A673 (cell line): ENCODE measurements at regions of chr18 and their contacts with region 1.

Region 1: DNA sequence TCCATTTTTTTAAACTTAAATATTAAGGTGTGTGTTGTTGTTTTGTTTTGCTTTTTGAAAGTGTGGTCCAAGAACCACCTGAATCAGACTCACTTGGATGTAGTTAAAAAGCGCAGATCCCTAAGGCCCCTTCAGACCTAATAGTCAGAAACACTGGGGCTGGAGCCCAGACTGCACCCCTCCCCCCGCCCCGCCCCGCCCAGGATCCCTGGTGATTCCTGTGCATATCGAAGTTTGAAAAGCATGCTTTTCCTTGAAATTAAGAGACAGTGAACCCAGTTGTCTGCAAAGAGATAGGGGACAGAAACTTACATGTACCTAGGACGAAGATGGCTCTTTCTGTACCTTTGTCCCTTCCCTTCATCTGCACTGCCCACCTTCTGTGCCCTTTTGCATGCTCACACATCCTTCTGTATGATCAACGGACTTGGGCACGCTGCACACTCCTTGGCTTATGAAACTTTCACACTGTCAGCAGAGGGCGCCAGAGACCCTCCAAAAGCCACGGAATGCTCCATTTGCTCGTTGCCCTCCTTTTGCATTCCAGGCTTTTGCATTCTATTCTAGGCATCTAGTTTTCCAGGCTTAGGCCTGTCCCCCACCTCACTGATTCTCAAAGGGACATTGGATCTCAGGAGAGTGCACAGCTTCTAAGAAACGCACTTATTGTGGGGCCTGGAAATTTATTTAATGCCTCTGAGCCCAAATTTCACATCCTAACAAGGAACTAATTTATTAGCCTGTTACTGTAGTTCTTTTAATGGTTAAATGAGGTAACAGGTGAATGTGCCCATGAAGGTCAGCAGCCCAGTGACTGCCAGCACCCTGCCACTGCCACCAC is 32.8 kb upstream of the SLC14A1 start:
- DNase-seq: peak; percentile 81
- H3K4me3 ChIP-seq: no peak overlapping the region
- H3K27ac ChIP-seq: no peak overlapping the region
- H3K4me1 ChIP-seq: peaks cover 3% of the 10 kb centered on the region
- H3K27me3 ChIP-seq: no peaks in the 10 kb centered on the region
- CTCF ChIP-seq: peak; percentile 84

Region 2: DNA sequence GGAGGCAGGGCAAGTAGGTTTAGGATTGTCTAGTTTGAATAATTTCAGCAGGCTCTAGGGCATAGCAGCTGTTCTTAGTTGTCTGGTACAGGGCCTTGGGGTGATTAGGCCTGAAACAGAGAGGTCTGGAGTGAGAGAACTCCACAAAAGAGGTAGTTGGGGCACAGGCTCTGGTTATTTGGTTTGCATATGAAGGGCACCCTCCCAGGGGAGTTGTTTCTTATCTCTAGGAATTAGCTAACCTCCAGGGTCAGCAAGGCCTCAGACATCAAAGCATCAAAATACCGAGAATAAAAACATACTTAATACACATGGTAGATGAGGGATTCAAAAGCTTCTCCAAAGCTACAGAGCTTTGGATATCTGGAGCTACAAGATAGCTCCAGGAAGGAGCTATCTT is 114.3 kb before region 1 on chr18:
- CTCF ChIA-PET with region 1: no interaction called
- POLR2A ChIA-PET with region 1: no interaction called
- intact Hi-C with region 1: no loop called
- DNase-seq: no peak
- H3K4me3 ChIP-seq: no peak overlapping the region
- H3K27ac ChIP-seq: no peak overlapping the region
- H3K4me1 ChIP-seq: no peaks in the 10 kb centered on the region
- H3K27me3 ChIP-seq: no peaks in the 10 kb centered on the region
- CTCF ChIP-seq: no peak

Region 3: DNA sequence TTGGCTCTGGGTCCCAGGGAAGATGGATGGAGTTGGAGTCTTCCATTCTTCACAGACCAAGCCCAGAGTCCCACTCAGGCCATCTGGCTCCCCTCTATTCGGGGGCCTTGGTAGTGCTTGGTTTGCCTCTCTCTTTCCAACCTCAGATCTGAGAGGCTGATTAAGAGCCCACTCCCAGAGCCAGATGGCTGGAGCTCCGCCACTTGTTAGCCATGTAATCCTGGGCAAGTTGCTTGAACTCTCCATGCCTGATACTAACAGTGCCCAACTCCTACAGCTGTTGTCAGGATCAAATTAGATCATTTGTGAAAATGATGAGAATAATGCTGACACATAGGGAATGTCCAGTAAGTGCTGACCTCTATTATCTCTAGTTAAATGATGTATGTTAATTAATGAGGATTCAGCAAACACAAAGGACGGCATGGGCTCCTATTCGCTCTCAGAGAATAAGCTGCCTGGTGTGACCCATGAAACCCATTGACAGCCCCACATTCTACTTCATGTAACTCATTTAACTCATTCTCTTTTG is 13.9 kb before region 1 on chr18:
- CTCF ChIA-PET with region 1: no interaction called
- POLR2A ChIA-PET with region 1: no interaction called
- intact Hi-C with region 1: no loop called
- DNase-seq: no peak
- H3K4me3 ChIP-seq: no peak overlapping the region
- H3K27ac ChIP-seq: no peak overlapping the region
- H3K4me1 ChIP-seq: no peaks in the 10 kb centered on the region
- H3K27me3 ChIP-seq: peaks cover 3% of the 10 kb centered on the region
- CTCF ChIP-seq: no peak

Region 4: GRCh38 chr18:45839414-45840395 is 148.5 kb after region 1 on chr18:
- CTCF ChIA-PET with region 1: no interaction called
- POLR2A ChIA-PET with region 1: no interaction called
- intact Hi-C with region 1: loop called (anchors 2 kb)
- DNase-seq: peak; percentile 68
- H3K4me3 ChIP-seq: no peak overlapping the region
- H3K27ac ChIP-seq: no peak overlapping the region
- H3K4me1 ChIP-seq: no peaks in the 10 kb centered on the region
- H3K27me3 ChIP-seq: peaks cover 56% of the 10 kb centered on the region
- CTCF ChIP-seq: peak; percentile 64

Region 5: DNA sequence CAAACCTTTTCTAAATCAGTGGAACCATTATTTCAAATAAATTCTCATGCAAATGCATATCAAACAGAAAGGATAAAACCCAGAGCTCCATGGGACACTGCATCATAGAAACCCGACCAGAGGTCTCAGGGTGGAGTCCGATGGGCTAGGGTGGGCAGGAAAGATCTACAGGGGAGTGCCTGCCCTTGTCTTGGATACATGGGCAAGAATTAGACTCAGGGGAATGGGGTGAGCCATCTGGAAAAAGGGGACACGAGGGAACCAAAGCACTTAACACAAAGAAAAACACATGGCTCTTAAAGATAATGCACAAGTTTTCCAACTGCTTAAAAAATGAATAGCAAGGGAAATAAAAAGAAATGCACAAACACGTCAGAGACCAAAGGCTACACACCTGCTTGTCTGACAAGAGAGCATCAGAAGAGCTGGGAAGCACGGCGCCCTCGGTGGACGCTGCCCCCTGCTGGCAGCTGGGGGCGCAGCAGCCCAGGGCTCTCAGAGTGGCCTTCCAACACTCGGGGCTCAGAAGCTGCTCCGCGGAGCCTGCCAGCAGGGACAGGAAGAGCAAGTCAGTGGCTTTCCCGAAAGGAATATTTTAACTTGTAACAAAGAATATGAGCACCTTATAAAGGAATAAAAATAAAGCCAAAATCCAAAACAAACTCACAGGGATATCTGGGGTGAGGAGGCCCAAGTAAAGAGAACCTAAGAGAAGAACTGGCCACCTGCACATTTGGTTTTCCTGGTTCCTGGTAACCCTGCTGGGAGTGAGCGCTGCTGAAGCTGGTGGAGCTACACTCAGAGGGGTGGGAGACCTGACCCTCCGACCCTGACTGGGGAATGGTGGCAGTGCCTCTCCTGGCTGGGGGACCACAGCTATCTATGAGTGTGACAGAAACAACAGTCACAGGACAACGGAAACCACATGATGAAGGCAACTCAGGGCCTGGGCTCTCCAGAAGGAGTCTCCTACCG is 188.8 kb after region 1 on chr18:
- CTCF ChIA-PET with region 1: interaction called, 3 read pairs
- POLR2A ChIA-PET with region 1: no interaction called
- intact Hi-C with region 1: loop called (anchors 1 kb)
- DNase-seq: peak; percentile 70
- H3K4me3 ChIP-seq: no peak overlapping the region
- H3K27ac ChIP-seq: no peak overlapping the region
- H3K4me1 ChIP-seq: no peaks in the 10 kb centered on the region
- H3K27me3 ChIP-seq: no peaks in the 10 kb centered on the region
- CTCF ChIP-seq: peak; percentile 99

Region 6: GRCh38 chr18:45910405-45911023 is 219.3 kb after region 1 on chr18:
- CTCF ChIA-PET with region 1: no interaction called
- POLR2A ChIA-PET with region 1: no interaction called
- intact Hi-C with region 1: loop called (anchors 1 kb)
- DNase-seq: peak; percentile 46
- H3K4me3 ChIP-seq: no peak overlapping the region
- H3K27ac ChIP-seq: no peak overlapping the region
- H3K4me1 ChIP-seq: no peaks in the 10 kb centered on the region
- H3K27me3 ChIP-seq: no peaks in the 10 kb centered on the region
- CTCF ChIP-seq: peak; percentile 81

Region 7: DNA sequence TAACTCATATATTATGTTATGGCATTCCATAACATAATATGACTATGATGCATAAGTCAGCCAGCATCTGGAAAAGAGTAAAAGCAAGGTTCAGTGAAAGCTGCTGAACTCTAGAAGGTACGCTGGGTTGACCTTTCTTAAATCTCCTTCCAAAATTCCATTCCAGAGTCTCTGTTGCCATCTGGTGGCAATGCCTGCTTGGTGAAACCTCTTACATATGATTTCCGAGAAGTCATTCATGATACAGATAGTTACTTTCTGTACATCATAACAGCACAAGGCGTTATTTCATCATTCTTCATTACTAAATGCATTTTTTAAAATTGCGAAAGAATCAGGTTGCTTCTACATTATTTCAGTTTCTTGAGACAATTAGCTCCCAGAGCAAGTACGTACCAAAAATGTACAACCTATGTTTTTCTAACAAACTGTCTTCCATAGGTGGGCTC is 282.9 kb after region 1 on chr18:
- CTCF ChIA-PET with region 1: no interaction called
- POLR2A ChIA-PET with region 1: no interaction called
- intact Hi-C with region 1: loop called (anchors 2 kb)
- DNase-seq: peak; percentile 82
- H3K4me3 ChIP-seq: no peak overlapping the region
- H3K27ac ChIP-seq: no peak overlapping the region
- H3K4me1 ChIP-seq: no peaks in the 10 kb centered on the region
- H3K27me3 ChIP-seq: no peaks in the 10 kb centered on the region
- CTCF ChIP-seq: peak; percentile 81

Region 8: DNA sequence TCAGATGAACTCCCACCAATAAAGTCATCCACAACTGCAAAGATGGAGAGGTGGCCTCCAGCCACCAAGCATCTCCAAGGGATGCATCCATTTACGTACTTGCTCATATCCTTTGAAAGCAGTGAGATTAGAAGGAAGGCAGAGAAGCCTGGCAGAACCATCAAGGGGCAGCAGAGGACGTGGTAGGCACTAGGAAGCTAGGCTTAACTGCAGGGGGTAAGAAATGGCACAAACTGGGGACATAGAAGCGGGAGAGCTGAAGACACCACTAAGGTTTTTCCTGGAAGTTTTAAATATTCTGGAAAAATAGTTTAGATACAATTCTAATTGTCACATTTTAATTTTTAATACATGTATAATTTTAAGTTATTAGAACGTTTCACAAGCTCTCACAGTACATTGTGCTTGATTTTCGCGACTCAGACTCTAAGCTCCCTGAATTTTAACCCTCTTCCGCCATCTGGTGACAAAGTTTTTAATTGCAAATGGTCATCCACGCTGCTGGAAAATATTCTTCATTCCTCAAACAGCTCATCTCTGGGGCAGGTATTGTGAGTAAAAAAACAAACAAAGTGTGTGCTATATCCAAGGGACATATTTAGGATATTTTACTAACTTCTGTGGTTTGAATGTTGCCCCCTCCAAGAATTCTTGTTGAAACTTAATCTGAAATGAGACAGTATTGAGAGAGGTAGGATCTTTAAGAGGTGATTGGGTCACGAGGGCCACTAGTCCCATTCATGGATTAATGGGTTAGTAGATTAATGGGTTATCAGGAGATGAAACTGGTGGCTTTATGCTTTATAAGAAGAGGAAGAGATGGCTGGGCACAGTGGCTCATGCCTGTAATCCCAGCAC is 382.5 kb after region 1 on chr18:
- CTCF ChIA-PET with region 1: interaction called, 9 read pairs
- POLR2A ChIA-PET with region 1: interaction called, 3 read pairs
- intact Hi-C with region 1: loop called (anchors 1 kb)
- DNase-seq: peak; percentile 83
- H3K4me3 ChIP-seq: no peak overlapping the region
- H3K27ac ChIP-seq: no peak overlapping the region
- H3K4me1 ChIP-seq: peaks cover 5% of the 10 kb centered on the region
- H3K27me3 ChIP-seq: no peaks in the 10 kb centered on the region
- CTCF ChIP-seq: peak; percentile 70